ENCODE measurements at regions of chr1 and their contacts with region 1.

Region 1: GRCh38 chr1:41455479-41456332 is 28.8 kb downstream of the EDN2 start:
- DNase-seq: peak; percentile 55
- H3K4me3 ChIP-seq: no peak overlapping the region
- H3K27ac ChIP-seq: peak overlapping the region in 2 of 4 donors; percentile 49 to 58
- H3K4me1 ChIP-seq: peaks cover 3 to 40% (median 16%) of the 10 kb centered on the region in 4 donors
- H3K27me3 ChIP-seq: no peaks in the 10 kb centered on the region
- CTCF ChIP-seq: no peak
- EP300 ChIP-seq: peak; percentile 77
- POLR2A ChIP-seq: no peak

Region 2: DNA sequence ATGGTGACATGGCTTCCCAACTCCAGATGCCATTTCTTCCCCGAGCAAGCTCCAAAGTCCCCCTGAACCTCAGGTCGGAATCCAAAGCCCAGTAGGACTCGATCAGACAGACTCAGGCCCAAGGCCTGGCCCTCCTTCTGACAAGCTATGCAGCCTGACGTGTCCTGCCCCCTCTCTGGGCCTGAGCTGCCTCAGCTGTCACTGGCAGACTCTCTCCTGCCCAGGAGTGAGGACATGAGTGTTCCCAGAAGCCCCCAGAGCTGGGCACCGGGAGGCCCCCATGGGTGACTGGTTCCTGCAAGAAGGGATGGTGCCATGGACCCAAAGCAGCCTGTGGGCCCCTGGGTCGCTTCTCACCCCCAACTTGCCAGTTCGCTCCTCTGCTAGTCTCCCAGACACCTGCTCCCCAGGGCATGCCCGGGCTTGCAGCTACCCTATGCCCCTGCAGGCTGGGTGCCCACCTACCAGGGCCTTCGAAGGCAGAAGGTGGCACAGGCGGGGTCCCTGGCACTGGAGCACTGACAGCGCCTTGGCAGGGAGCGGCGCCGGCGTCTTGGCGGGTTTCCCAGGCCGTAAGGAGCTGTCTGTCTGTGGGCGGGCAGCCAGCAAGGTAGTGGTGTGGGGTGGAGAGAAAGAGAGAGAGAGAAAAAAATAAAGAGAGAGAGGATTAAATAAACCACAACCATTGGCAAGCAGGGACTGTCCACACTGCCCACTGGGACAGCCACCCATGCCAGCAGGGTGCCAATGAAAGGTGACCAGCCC is 26.5 kb after region 1 on chr1:
- in situ Hi-C with region 1: no loop called
- intact Hi-C with region 1: loop called (anchors 1 kb)
- DNase-seq: peak; percentile 90
- H3K4me3 ChIP-seq: no peak overlapping the region
- H3K27ac ChIP-seq: peak overlapping the region; percentile 18 to 63 (median 52)
- H3K4me1 ChIP-seq: peaks cover 52 to 58% (median 54%) of the 10 kb centered on the region in 4 donors
- H3K27me3 ChIP-seq: no peaks in the 10 kb centered on the region
- CTCF ChIP-seq: no peak
- EP300 ChIP-seq: no peak
- POLR2A ChIP-seq: no peak